CD4-positive, alpha-beta memory T cell (primary cell): ENCODE measurements at regions of chr14 and their contacts with region 1.

Region 1: DNA sequence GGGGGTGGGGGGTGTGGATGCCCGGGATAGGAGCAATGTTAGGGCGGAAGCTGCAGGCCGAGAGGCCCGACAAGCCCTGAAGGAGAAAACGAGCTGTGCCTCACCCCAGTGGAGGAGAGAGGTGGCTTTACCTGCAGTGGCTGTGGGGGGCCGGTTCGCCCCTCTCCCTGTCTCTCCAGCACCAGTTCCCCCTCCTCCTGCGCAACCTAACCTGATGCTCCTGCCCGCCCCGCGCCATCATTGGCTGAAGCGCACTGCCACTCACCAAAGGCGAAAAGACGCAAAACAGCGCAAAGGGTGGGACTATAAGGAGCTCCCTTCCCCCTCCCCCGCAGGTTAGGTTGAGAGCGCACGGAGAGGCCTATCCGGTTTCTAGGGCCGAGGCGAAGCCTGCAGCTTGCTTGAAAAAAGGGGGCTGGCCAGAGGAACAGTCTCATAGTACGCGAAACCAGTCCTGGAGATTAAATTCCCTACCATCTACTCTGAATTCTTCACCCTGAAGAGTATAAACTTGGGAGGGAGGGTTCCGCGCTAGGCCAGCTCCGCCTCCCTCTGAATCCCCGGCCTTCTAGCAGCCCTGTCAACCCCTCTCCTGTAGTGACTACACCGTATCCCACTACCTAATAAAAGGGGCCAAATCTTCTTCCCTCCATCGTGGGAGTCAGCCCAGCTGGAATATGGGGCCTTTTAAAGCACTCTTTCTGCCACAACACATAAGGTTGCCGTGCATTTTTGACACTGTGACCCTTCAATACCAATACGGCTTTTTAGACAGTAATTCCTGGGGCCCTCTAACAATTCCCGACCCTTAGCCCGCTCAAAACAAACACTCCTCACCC is 18.6 kb downstream of the CHD8 start:
- DNase-seq: peak; percentile 98 to 99 (median 98)
- H3K4me3 ChIP-seq: peak overlapping the region; percentile 64 to 95
- H3K4me3 Mint-ChIP-seq: peak overlapping the region; percentile 94 to 99 (median 96)
- H3K27ac ChIP-seq: peak overlapping the region; percentile 85
- H3K27ac Mint-ChIP-seq: peak overlapping the region; percentile 93 to 99 (median 96)
- H3K4me1 ChIP-seq: peaks cover 38% of the 10 kb centered on the region
- H3K4me1 Mint-ChIP-seq: peaks cover 49 to 74% (median 62%) of the 10 kb centered on the region in 4 donors
- H3K27me3 ChIP-seq: no peaks in the 10 kb centered on the region
- H3K27me3 Mint-ChIP-seq: no peaks in the 10 kb centered on the region

Region 2: GRCh38 chr14:21383848-21384493 is 53.3 kb before region 1 on chr14 and contains the start of gene SUPT16H:
- CTCF ChIA-PET with region 1: no interaction called
- POLR2A ChIA-PET with region 1: interaction called, 15 read pairs
- intact Hi-C with region 1: loop called (anchors 2 kb)
- DNase-seq: peak; percentile 91 to 96 (median 93)
- H3K4me3 ChIP-seq: peak within 1 kb of the TSS; percentile 98 to 99
- H3K4me3 Mint-ChIP-seq: peak within 1 kb of the TSS; percentile 95 to 100 (median 97)
- H3K27ac ChIP-seq: peak within 1 kb of the TSS; percentile 82
- H3K27ac Mint-ChIP-seq: peak within 1 kb of the TSS; percentile 96 to 100 (median 99)
- H3K4me1 ChIP-seq: peaks cover 47% of the 10 kb centered on the region
- H3K4me1 Mint-ChIP-seq: peaks cover 25 to 53% (median 38%) of the 10 kb centered on the region in 4 donors
- H3K27me3 ChIP-seq: no peaks in the 10 kb centered on the region
- H3K27me3 Mint-ChIP-seq: no peaks in the 10 kb centered on the region
- total RNA-seq, gene SUPT16H: 84.5 to 87.2 TPM

Region 3: GRCh38 chr14:21449899-21450216 is 12.6 kb after region 1 on chr14:
- CTCF ChIA-PET with region 1: interaction called, 82 read pairs
- POLR2A ChIA-PET with region 1: interaction called, 171 read pairs
- intact Hi-C with region 1: no loop called
- DNase-seq: no peak
- H3K4me3 ChIP-seq: no peak overlapping the region
- H3K4me3 Mint-ChIP-seq: peak overlapping the region in 4 of 8 donors; percentile 35 to 55 (median 44)
- H3K27ac ChIP-seq: peak overlapping the region; percentile 18
- H3K27ac Mint-ChIP-seq: peak overlapping the region; percentile 6 to 81 (median 43)
- H3K4me1 ChIP-seq: peaks cover 66% of the 10 kb centered on the region
- H3K4me1 Mint-ChIP-seq: peaks cover 44 to 75% (median 58%) of the 10 kb centered on the region in 4 donors
- H3K27me3 ChIP-seq: no peaks in the 10 kb centered on the region
- H3K27me3 Mint-ChIP-seq: no peaks in the 10 kb centered on the region

Region 4: GRCh38 chr14:21476925-21477681 is 39.8 kb after region 1 on chr14 and contains the starts of genes RAB2B and TOX4:
- CTCF ChIA-PET with region 1: interaction called, 8 read pairs
- POLR2A ChIA-PET with region 1: interaction called, 34 read pairs
- intact Hi-C with region 1: loop called (anchors 1 kb)
- DNase-seq: peak; percentile 98
- H3K4me3 ChIP-seq: peak within 1 kb of the TSS; percentile 69 to 97
- H3K4me3 Mint-ChIP-seq: peak within 1 kb of the TSS; percentile 98 to 100 (median 100)
- H3K27ac ChIP-seq: peak within 1 kb of the TSS; percentile 81
- H3K27ac Mint-ChIP-seq: peak within 1 kb of the TSS; percentile 95 to 100 (median 100)
- H3K4me1 ChIP-seq: peaks cover 27% of the 10 kb centered on the region
- H3K4me1 Mint-ChIP-seq: peaks cover 28 to 63% (median 45%) of the 10 kb centered on the region in 4 donors
- H3K27me3 ChIP-seq: no peaks in the 10 kb centered on the region
- H3K27me3 Mint-ChIP-seq: no peaks in the 10 kb centered on the region
- total RNA-seq, gene RAB2B: 29.3 to 30.4 TPM
- total RNA-seq, gene TOX4: 83.6 to 86.0 TPM

Region 5: GRCh38 chr14:21525962-21526671 is 88.8 kb after region 1 on chr14 and contains the start of gene SALL2:
- CTCF ChIA-PET with region 1: no interaction called
- POLR2A ChIA-PET with region 1: interaction called, 11 read pairs
- intact Hi-C with region 1: no loop called
- DNase-seq: peak; percentile 44 to 78 (median 45)
- H3K4me3 ChIP-seq: peak within 1 kb of the TSS; percentile 42 to 67
- H3K4me3 Mint-ChIP-seq: peak within 1 kb of the TSS; percentile 81 to 90 (median 84)
- H3K27ac ChIP-seq: peak within 1 kb of the TSS; percentile 43
- H3K27ac Mint-ChIP-seq: peak within 1 kb of the TSS; percentile 21 to 92 (median 81)
- H3K4me1 ChIP-seq: peaks cover 15% of the 10 kb centered on the region
- H3K4me1 Mint-ChIP-seq: peaks cover 7 to 20% (median 11%) of the 10 kb centered on the region in 4 donors
- H3K27me3 ChIP-seq: no peaks in the 10 kb centered on the region
- H3K27me3 Mint-ChIP-seq: no peaks in the 10 kb centered on the region
- total RNA-seq, gene SALL2: 6.5 to 6.6 TPM

Region 6: GRCh38 chr14:21557084-21557901 is 120.0 kb after region 1 on chr14:
- CTCF ChIA-PET with region 1: no interaction called
- POLR2A ChIA-PET with region 1: no interaction called
- intact Hi-C with region 1: loop called (anchors 1 kb)
- DNase-seq: peak; percentile 71 to 77 (median 75)
- H3K4me3 ChIP-seq: peak overlapping the region in 1 of 2 donors; percentile 35
- H3K4me3 Mint-ChIP-seq: peak overlapping the region in 7 of 8 donors; percentile 0 to 58 (median 6)
- H3K27ac ChIP-seq: no peak overlapping the region
- H3K27ac Mint-ChIP-seq: peak overlapping the region in 5 of 7 donors; percentile 3 to 90 (median 83)
- H3K4me1 ChIP-seq: peaks cover 6% of the 10 kb centered on the region
- H3K4me1 Mint-ChIP-seq: peaks cover 4 to 11% (median 6%) of the 10 kb centered on the region in 4 donors
- H3K27me3 ChIP-seq: no peaks in the 10 kb centered on the region
- H3K27me3 Mint-ChIP-seq: no peaks in the 10 kb centered on the region